Psoas muscle (tissue), 8 donors: ENCODE measurements at regions of chr1 and their contacts with region 1.

Region 1: GRCh38 chr1:181166377-181167196 is 78.1 kb downstream of the IER5 start:
- DNase-seq: peak; percentile 50 to 71
- ATAC-seq: peak; percentile 97 to 99 (median 99)
- H3K4me3 ChIP-seq: no peak overlapping the region
- H3K27ac ChIP-seq: no peak overlapping the region
- H3K4me1 ChIP-seq: peaks cover 7% of the 10 kb centered on the region
- H3K27me3 ChIP-seq: no peaks in the 10 kb centered on the region
- CTCF ChIP-seq: peak; percentile 90

Region 2: GRCh38 chr1:180515864-180516388 is 650.7 kb before region 1 on chr1:
- intact Hi-C with region 1: loop called in 1 of 2 experiments (anchors 5 kb)
- DNase-seq: peak; percentile 27 to 61
- ATAC-seq: peak; percentile 91 to 99 (median 98)
- H3K4me3 ChIP-seq: no peak overlapping the region
- H3K27ac ChIP-seq: no peak overlapping the region
- H3K4me1 ChIP-seq: peaks cover 5% of the 10 kb centered on the region
- H3K27me3 ChIP-seq: no peaks in the 10 kb centered on the region
- CTCF ChIP-seq: peak; percentile 88

Region 3: DNA sequence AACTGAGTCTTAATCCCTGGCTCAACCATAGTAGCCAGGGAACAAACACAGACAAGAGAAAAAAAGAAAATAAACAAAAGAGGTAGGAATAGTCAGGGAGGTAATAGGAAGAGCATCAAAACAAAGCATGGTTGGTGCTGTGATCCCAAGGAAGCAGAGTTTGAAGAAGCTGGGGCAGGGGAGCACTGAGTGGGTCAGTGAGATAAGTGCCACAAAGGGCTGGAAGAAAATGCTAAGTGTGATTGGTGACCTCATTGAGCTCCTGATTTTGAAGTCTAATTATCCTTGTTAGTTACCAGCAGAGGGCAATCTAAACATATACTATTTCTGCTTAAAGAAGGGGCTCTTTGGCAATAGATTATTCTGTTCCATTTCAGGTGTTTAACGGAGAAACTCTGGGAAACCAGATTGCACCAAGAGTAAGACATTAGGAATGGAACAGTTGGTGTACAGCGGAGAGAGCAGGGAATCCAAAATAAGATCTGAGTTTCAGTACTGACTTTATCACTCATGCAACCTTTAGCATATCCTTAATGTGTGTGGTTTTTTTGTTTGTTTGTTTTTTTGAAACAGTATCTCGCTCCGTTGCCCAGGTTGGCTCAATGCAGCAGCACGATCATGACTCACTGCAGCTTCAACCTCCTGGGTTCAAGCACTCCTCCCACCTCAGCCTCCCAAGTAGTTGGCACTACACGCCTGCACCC is 284.6 kb before region 1 on chr1:
- intact Hi-C with region 1: loop called (anchors 1 to 5 kb)
- DNase-seq: no peak
- ATAC-seq: peak; percentile 58 to 80 (median 71)
- H3K4me3 ChIP-seq: no peak overlapping the region
- H3K27ac ChIP-seq: peak overlapping the region; percentile 27
- H3K4me1 ChIP-seq: no peaks in the 10 kb centered on the region
- H3K27me3 ChIP-seq: no peaks in the 10 kb centered on the region
- CTCF ChIP-seq: peak; percentile 59

Region 4: DNA sequence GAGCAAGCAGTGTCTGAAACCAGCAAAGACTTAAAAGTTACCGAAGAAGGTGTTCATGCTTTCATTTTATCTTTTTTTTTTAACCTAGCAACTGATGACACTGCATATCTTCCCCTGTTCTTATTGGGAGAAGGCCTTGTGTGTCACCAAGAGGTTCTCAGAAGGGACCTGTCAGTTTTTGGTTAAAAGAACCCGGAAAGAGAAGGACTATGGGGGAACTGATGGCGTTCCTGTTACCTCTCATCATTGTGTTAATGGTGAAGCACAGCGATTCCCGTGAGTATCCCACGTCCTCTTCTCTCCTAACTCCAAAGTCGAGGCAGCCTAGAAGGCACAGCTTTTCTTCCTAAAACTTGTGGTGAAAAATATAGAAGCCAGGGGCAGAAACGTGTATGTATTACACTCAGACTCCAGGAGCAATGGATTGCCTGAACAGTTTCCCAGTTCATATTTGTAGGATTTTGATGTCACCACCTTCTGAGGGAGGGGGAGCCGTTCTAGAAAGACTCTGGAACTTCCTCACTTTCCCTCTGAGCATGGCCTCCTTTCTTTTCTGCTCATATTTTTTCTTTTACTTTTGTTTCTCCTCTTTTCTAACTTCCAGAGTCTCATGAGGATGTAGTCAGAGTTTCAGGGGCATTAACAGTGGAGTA is 132.7 kb before region 1 on chr1 and contains the start of gene MR1:
- intact Hi-C with region 1: loop called in 1 of 2 experiments (anchors 5 kb)
- DNase-seq: no peak
- ATAC-seq: peak; percentile 82 to 93 (median 85)
- H3K4me3 ChIP-seq: peak within 1 kb of the TSS; percentile 70
- H3K27ac ChIP-seq: peak within 1 kb of the TSS; percentile 93
- H3K4me1 ChIP-seq: peaks cover 19% of the 10 kb centered on the region
- H3K27me3 ChIP-seq: no peaks in the 10 kb centered on the region
- CTCF ChIP-seq: no peak
- total RNA-seq, gene MR1: 2.0 to 3.0 (median 2.6) TPM